Tibial artery (tissue), 4 donors: ENCODE measurements at regions of chr2 and their contacts with region 1.

Region 1: GRCh38 chr2:48420512-48421197 is 109.3 kb upstream of the STON1 start:
- DNase-seq: peak; percentile 86 to 90
- H3K4me3 ChIP-seq: no peak overlapping the region
- H3K27ac ChIP-seq: no peak overlapping the region
- H3K4me1 ChIP-seq: peaks cover 0 to 13% (median 4%) of the 10 kb centered on the region in 4 donors
- H3K27me3 ChIP-seq: no peaks in the 10 kb centered on the region
- CTCF ChIP-seq: peak; percentile 92 to 98

Region 2: GRCh38 chr2:47850198-47850597 is 570.5 kb before region 1 on chr2:
- intact Hi-C with region 1: loop called (anchors 10 kb)
- DNase-seq: no peak
- H3K4me3 ChIP-seq: no peak overlapping the region
- H3K27ac ChIP-seq: no peak overlapping the region
- H3K4me1 ChIP-seq: peaks cover 0 to 50% (median 4%) of the 10 kb centered on the region in 4 donors
- H3K27me3 ChIP-seq: no peaks in the 10 kb centered on the region
- CTCF ChIP-seq: no peak

Region 3: GRCh38 chr2:48362515-48362914 is 58.1 kb before region 1 on chr2:
- intact Hi-C with region 1: no loop called
- DNase-seq: no peak
- H3K4me3 ChIP-seq: no peak overlapping the region
- H3K27ac ChIP-seq: no peak overlapping the region
- H3K4me1 ChIP-seq: peaks cover 0 to 22% (median 3%) of the 10 kb centered on the region in 4 donors
- H3K27me3 ChIP-seq: no peaks in the 10 kb centered on the region
- CTCF ChIP-seq: no peak

Region 4: DNA sequence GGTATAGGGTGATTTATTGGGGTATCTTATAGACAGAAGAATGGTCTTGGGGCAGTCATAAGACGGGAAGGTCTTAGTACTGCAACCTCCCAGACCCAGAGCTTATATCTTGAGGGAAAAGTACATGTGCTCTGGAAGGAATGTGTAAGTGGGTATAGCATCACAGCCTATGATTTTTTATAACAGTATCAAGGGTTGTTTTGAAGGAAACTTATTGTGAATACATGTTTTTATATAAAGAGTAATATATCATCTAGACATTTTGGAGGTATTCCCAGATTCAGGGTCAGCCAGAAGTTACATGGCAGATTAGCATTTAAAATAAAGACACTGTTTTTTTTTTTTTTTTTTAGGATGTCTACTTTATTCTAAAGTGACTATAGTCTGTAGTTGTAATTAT is 61.7 kb after region 1 on chr2:
- intact Hi-C with region 1: no loop called
- DNase-seq: no peak
- H3K4me3 ChIP-seq: no peak overlapping the region
- H3K27ac ChIP-seq: peak overlapping the region in 1 of 2 donors; percentile 61
- H3K4me1 ChIP-seq: peaks cover 0 to 27% (median 7%) of the 10 kb centered on the region in 4 donors
- H3K27me3 ChIP-seq: no peaks in the 10 kb centered on the region
- CTCF ChIP-seq: no peak

Region 5: GRCh38 chr2:48508461-48509124 is 87.9 kb after region 1 on chr2:
- intact Hi-C with region 1: no loop called
- DNase-seq: no peak
- H3K4me3 ChIP-seq: no peak overlapping the region
- H3K27ac ChIP-seq: peak overlapping the region; percentile 29 to 33
- H3K4me1 ChIP-seq: peaks cover 0 to 29% (median 1%) of the 10 kb centered on the region in 4 donors
- H3K27me3 ChIP-seq: no peaks in the 10 kb centered on the region
- CTCF ChIP-seq: no peak